ENCODE measurements at regions of chr16 and their contacts with region 1.

Region 1: DNA sequence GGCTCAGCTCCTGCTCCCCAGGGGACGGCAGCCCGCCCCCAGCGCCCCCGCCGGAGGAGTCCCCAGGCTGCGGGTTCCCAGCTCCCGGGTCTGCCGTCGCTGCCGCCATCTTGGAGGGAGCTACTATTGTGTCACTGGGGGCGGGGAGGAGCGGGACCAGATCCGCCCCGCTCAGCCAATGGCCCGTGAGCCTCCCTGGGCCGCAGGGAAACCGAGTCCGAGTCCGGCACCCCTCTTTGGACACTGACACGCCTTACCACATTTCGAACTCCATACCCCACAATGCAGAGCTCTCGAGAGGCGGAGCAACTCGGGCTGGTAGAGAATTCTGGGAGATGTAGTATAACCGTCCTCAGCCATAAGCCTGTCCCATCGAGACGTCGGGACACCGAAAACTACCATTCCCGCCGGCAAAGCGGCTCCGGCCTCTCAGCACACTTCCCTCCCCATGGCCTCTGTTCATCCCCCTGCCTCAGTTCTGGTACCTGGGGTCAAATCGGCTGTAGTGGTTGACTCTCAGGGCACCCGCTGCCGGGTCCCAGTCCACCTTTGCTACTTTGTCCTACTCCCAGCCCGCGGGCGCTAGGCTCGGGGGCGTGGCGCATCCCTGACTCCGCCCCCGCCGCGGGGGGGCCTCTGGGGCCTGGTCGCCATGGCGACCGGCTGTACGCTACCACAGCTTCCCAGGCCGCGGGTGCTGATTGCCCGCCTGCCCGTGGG is at the starts of genes RANBP10 and TSNAXIP1:
- DNase-seq: peak; percentile 93
- ATAC-seq: peak; percentile 89
- H3K4me3 Mint-ChIP-seq: peak within 1 kb of the TSS; percentile 96
- H3K27ac Mint-ChIP-seq: peak within 1 kb of the TSS; percentile 96
- H3K4me1 Mint-ChIP-seq: peaks cover 49% of the 10 kb centered on the region
- H3K27me3 Mint-ChIP-seq: no peaks in the 10 kb centered on the region
- CTCF ChIP-seq: no peak
- total RNA-seq, gene RANBP10: 25.2 and 30.6 TPM in 2 replicates
- total RNA-seq, gene TSNAXIP1: 1.2 and 1.9 TPM in 2 replicates

Region 2: DNA sequence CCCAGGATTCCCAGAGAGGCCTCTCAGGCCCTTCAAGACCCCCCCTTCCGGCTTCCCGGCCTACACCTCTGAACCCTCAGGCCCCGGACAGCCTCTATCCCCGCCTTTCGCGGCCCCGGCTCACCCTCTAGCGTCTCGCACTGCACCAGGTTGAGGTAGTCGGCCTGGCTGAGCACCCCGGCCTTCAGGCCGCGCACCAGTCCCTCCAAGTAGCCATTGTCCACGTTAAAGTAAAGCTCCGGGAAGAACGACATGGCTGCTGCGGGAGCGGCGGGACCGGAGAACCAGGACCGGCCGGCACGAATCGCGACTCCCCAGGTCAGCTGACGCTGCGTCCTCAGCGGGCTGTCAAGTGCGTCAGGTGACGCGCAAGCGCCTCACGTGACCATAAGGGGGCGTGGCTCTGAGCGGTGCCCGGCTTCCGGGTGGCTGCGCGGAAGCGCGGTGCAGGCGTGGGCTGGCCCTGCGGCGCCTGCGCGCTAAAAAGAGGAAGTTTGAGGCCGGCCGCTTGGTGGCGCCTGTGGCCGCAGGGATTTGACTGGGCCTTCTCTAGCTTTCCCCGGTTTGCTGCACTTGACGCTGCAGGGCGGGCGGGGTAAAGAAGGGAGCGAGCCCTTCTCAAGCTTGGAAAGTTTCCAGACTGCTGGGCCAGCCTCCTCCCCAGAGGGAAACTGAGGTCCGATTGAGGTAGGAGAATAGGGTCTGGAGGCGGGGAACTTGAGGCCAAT is 325.6 kb before region 1 on chr16 and contains the start of gene ATP6V0D1:
- CTCF ChIA-PET with region 1: no interaction called
- POLR2A ChIA-PET with region 1: no interaction called
- intact Hi-C with region 1: loop called (anchors 2 kb)
- DNase-seq: peak; percentile 99
- ATAC-seq: peak; percentile 82
- H3K4me3 Mint-ChIP-seq: peak within 1 kb of the TSS; percentile 99
- H3K27ac Mint-ChIP-seq: peak within 1 kb of the TSS; percentile 99
- H3K4me1 Mint-ChIP-seq: peaks cover 69% of the 10 kb centered on the region
- H3K27me3 Mint-ChIP-seq: no peaks in the 10 kb centered on the region
- CTCF ChIP-seq: no peak
- total RNA-seq, gene ATP6V0D1: 70.2 and 74.5 TPM in 2 replicates

Region 3: GRCh38 chr16:67660564-67661028 is 146.0 kb before region 1 on chr16 and contains the start of gene PARD6A:
- CTCF ChIA-PET with region 1: no interaction called
- POLR2A ChIA-PET with region 1: interaction called, 12 read pairs
- intact Hi-C with region 1: loop called (anchors 1 kb)
- DNase-seq: peak; percentile 87
- ATAC-seq: peak; percentile 80
- H3K4me3 Mint-ChIP-seq: peak within 1 kb of the TSS; percentile 94
- H3K27ac Mint-ChIP-seq: peak within 1 kb of the TSS; percentile 94
- H3K4me1 Mint-ChIP-seq: peaks cover 28% of the 10 kb centered on the region
- H3K27me3 Mint-ChIP-seq: no peaks in the 10 kb centered on the region
- CTCF ChIP-seq: no peak
- total RNA-seq, gene PARD6A: 5.9 and 6.0 TPM in 2 replicates

Region 4: GRCh38 chr16:67719048-67719777 is 87.4 kb before region 1 on chr16 and contains the start of gene GFOD2:
- CTCF ChIA-PET with region 1: interaction called, 4 read pairs
- POLR2A ChIA-PET with region 1: interaction called, 20 read pairs
- intact Hi-C with region 1: loop called (anchors 1 kb)
- DNase-seq: peak; percentile 98
- ATAC-seq: peak; percentile 94
- H3K4me3 Mint-ChIP-seq: peak within 1 kb of the TSS; percentile 97
- H3K27ac Mint-ChIP-seq: peak within 1 kb of the TSS; percentile 98
- H3K4me1 Mint-ChIP-seq: peaks cover 37% of the 10 kb centered on the region
- H3K27me3 Mint-ChIP-seq: no peaks in the 10 kb centered on the region
- CTCF ChIP-seq: no peak
- total RNA-seq, gene GFOD2: 9.7 and 12.6 TPM in 2 replicates

Region 5: DNA sequence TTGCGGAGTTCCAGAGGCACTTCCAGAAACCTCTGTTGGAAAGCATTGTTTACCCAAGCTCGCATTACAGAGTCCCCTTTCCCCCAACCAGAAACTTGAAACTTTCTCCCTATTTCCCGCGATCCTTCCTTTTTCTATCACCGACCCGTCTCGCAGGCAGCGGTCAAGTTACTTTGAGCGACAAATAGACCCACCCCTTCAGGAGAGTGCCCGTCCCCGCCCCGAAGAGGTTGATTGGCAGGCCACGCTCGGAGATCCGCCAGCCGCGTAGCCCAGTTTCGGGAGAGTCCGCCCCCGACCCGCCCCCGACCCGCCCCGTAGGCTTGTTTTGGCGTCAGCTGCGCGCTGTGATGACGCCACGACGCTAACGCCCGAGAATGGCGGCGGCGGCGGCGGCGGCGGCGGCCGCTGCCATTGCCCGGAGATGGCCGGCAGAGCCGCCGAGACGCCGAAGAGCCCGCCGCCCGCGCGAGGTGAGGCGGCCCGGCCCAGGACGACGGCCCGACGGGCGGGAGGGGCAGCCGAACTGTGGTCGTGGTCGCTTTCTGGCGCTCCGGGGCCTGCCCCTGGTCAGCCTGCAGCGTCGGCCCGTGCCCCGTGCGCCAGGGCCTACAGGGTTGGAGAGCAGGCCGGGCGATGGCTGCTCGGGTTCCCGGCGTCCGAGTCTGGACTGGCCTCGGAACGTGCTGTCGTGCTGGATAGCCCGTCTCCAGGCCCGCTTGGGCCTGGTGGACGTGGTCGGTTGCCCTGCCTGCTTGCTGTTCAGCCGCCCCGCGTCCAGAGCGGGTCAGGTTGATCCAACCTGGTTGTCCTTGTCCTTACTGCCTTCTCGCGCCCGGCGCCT is 86.5 kb after region 1 on chr16 and contains the start of gene PSKH1:
- CTCF ChIA-PET with region 1: no interaction called
- POLR2A ChIA-PET with region 1: interaction called, 3 read pairs
- intact Hi-C with region 1: loop called (anchors 1 kb)
- DNase-seq: peak; percentile 80
- ATAC-seq: peak; percentile 99
- H3K4me3 Mint-ChIP-seq: peak within 1 kb of the TSS; percentile 94
- H3K27ac Mint-ChIP-seq: peak within 1 kb of the TSS; percentile 86
- H3K4me1 Mint-ChIP-seq: peaks cover 31% of the 10 kb centered on the region
- H3K27me3 Mint-ChIP-seq: no peaks in the 10 kb centered on the region
- CTCF ChIP-seq: no peak
- total RNA-seq, gene PSKH1: 19.2 and 22.0 TPM in 2 replicates

Region 6: DNA sequence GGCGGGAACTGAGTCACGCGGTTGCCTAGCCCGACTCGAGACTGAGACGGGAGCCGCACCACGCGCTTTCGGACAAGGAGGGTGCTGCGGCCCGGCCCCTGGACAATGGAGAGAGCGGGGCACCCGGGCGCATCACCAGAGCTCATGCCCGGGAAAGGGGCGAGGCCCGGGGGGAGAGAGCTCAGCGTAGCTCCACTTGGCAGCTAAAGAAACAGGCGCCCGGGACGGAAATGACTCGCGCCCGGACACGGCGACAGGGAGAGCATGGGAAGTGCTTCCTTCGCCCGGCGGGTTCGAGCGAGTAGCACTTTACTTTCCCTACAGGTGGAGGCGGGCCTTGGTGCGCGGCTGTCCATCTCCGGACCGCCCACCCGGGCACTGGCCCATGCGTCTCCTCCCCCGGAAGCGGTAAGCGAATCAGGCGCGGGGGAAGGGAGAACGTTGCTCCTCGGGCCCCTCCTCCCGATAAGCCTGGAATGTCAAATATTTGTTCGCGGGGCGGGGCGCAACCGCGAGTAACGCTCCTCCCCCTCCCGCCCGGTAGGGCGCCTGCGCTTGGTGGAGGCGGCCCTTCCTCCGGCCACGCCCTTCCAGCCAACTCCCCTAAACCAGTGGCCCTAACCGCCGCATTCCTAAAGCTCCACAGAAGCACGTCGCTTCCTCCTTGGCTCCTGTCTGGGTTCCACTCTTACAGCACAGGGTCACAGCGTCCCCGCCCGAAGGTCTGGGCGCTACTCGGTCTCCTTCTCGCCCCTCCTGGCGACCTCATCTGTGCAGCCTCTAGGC is 430.8 kb after region 1 on chr16:
- CTCF ChIA-PET with region 1: no interaction called
- POLR2A ChIA-PET with region 1: interaction called, 3 read pairs
- intact Hi-C with region 1: loop called (anchors 2 kb)
- DNase-seq: peak; percentile 84
- ATAC-seq: peak; percentile 83
- H3K4me3 Mint-ChIP-seq: peak overlapping the region; percentile 93
- H3K27ac Mint-ChIP-seq: peak overlapping the region; percentile 79
- H3K4me1 Mint-ChIP-seq: peaks cover 33% of the 10 kb centered on the region
- H3K27me3 Mint-ChIP-seq: no peaks in the 10 kb centered on the region
- CTCF ChIP-seq: no peak